ENCODE measurements at regions of chr19 and their contacts with region 1.

Region 1: GRCh38 chr19:5803752-5804515 is 933 bp upstream of the NRTN start:
- DNase-seq: peak; percentile 92
- H3K4me3 Mint-ChIP-seq: peak overlapping the region; percentile 62
- H3K27ac Mint-ChIP-seq: peak overlapping the region; percentile 60
- H3K4me1 Mint-ChIP-seq: peaks cover 28% of the 10 kb centered on the region
- H3K27me3 Mint-ChIP-seq: peaks cover 45% of the 10 kb centered on the region

Region 2: GRCh38 chr19:5690125-5690954 is 113.6 kb before region 1 on chr19 and contains the start of gene RPL36:
- CTCF ChIA-PET with region 1: interaction called, 13 read pairs
- POLR2A ChIA-PET with region 1: no interaction called
- DNase-seq: peak; percentile 98
- H3K4me3 Mint-ChIP-seq: peak within 1 kb of the TSS; percentile 92
- H3K27ac Mint-ChIP-seq: peak within 1 kb of the TSS; percentile 92
- H3K4me1 Mint-ChIP-seq: peaks cover 31% of the 10 kb centered on the region
- H3K27me3 Mint-ChIP-seq: no peaks in the 10 kb centered on the region
- total RNA-seq, gene RPL36: 880 to 925 TPM

Region 3: DNA sequence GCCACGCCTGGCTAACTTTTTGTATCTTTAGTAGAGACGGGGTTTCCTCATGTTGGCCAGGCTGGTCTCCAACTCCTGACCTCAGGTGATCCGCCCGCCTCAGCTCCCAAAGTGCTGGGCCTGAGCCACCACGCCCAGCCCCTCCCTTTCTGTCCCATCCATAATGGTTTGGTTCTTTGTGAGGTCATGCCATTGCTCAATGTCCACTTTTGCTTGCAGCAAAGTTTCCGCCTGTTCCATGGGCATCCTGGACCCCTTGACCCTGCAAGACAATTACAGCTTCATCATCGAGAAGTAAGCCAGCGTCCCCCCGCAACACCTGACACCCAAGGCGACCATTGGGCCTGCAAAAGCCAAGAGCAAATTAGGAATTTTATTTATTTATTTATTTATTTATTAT is 36.0 kb before region 1 on chr19:
- CTCF ChIA-PET with region 1: no interaction called
- POLR2A ChIA-PET with region 1: no interaction called
- DNase-seq: no peak
- H3K4me3 Mint-ChIP-seq: no peak overlapping the region
- H3K27ac Mint-ChIP-seq: no peak overlapping the region
- H3K4me1 Mint-ChIP-seq: no peaks in the 10 kb centered on the region
- H3K27me3 Mint-ChIP-seq: no peaks in the 10 kb centered on the region

Region 4: GRCh38 chr19:5814123-5814851 is 10.4 kb after region 1 on chr19:
- CTCF ChIA-PET with region 1: interaction called, 12 read pairs
- POLR2A ChIA-PET with region 1: no interaction called
- DNase-seq: no peak
- H3K4me3 Mint-ChIP-seq: no peak overlapping the region
- H3K27ac Mint-ChIP-seq: no peak overlapping the region
- H3K4me1 Mint-ChIP-seq: no peaks in the 10 kb centered on the region
- H3K27me3 Mint-ChIP-seq: no peaks in the 10 kb centered on the region

Region 5: DNA sequence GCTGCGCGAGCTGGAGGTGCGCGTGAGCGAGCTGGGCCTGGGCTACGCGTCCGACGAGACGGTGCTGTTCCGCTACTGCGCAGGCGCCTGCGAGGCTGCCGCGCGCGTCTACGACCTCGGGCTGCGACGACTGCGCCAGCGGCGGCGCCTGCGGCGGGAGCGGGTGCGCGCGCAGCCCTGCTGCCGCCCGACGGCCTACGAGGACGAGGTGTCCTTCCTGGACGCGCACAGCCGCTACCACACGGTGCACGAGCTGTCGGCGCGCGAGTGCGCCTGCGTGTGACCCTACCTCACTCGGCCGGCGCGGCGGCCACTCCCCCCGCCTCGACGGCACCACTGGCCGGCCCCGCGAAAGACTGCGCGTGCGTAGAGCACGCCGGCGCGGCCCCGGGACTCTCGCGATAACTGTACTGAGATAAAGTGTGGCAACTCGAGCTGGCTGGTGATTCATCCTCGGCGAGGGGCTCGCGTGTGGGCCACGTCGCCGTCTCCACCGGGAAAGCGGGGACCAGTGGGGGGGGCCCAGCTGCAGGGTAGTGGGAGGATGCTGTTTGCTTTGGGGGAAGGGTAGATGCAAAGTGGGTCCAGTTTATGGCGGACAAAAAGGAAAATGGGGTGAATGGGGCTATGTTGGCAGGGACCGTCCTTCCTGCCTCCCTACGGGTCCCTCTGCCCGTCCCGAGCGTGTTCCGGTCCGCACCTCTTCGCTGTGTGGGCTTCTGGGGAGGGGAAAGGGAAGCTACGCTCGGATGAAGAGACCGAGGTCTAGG is 24.1 kb after region 1 on chr19:
- CTCF ChIA-PET with region 1: interaction called, 60 read pairs
- POLR2A ChIA-PET with region 1: interaction called, 6 read pairs
- DNase-seq: peak; percentile 93
- H3K4me3 Mint-ChIP-seq: peak overlapping the region; percentile 99
- H3K27ac Mint-ChIP-seq: peak overlapping the region; percentile 100
- H3K4me1 Mint-ChIP-seq: peaks cover 12% of the 10 kb centered on the region
- H3K27me3 Mint-ChIP-seq: no peaks in the 10 kb centered on the region

Region 6: DNA sequence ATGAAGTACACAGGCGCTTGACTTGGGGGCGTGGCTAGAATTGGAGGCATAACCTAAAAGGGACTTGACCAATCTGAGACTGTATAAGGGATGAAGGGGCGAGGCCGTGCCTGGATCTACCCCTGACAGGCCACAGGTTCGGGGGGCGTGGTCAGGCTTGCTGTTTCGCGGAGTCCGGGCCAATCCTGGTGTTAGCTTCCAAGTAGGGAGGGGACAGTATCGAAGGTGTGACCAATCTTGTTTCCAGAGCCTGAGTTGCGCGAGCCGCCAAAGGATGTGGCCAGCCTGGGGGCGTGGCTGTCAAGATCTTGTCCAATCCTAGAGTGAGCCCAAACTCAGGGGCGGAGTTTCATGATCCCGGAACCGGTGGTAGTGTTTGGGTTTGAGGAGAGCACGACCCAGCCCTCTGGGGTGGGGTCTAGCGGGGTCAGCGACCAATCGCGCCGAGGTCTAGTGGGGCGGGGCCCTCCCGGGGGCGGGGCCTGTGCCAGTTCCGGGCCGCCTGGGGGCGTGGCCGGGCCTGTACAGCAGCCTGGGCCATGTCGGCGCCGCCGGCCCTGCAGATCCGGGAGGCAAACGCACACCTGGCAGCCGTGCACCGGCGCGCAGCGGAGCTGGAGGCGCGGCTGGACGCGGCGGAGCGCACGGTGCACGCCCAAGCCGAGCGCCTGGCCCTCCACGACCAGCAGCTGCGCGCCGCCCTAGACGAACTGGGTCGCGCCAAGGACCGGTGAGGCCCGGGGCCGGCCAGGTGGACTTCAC is 100.6 kb after region 1 on chr19 and contains the start of gene VMAC:
- CTCF ChIA-PET with region 1: interaction called, 39 read pairs
- POLR2A ChIA-PET with region 1: no interaction called
- DNase-seq: peak; percentile 100
- H3K4me3 Mint-ChIP-seq: peak within 1 kb of the TSS; percentile 86
- H3K27ac Mint-ChIP-seq: peak within 1 kb of the TSS; percentile 100
- H3K4me1 Mint-ChIP-seq: peaks cover 32% of the 10 kb centered on the region
- H3K27me3 Mint-ChIP-seq: no peaks in the 10 kb centered on the region
- total RNA-seq, gene VMAC: 11.8 TPM

Region 7: DNA sequence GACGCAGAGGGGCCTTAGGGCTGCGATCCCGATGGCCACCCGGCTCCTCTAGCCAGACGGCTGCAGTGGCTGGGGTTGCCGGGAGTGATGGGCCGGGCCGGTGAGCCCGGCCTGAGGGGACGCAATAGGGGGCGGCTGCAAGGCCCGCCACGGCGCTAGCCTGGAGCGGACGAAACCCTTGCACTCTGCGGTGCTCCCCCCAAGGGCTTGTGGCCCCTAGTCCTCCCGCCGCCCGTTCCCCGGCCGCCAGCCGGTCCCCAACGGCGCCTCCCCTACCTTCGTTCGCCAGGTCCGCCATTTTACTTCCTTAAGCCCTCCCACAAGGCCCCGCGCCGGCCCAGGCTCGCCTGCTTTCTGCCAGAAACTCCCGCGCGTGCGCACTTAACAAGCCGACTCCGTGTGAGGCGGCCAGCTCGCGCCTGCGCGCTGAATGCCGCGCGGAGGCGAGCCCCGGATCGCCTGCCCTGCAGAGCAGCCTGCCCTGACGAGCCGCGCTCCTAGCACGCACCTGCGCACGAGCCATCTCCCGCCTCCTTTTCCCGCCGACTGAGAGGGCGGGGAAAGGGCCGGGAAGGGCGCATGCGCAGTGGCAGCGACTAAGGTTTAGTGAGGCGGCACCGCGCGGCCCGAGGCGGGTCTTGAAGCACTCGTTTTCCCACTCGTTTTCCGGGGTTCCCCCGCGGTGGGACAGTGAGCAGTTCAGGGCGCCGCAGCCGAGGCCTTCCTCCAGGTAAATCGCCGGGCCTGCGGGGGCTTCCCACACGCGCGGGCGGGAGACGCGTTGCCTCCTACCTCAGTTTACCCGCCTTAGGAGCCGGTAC is 174.1 kb after region 1 on chr19 and contains the start of gene RANBP3:
- CTCF ChIA-PET with region 1: interaction called, 12 read pairs
- POLR2A ChIA-PET with region 1: no interaction called
- DNase-seq: peak; percentile 98
- H3K4me3 Mint-ChIP-seq: peak within 1 kb of the TSS; percentile 94
- H3K27ac Mint-ChIP-seq: peak within 1 kb of the TSS; percentile 93
- H3K4me1 Mint-ChIP-seq: peaks cover 59% of the 10 kb centered on the region
- H3K27me3 Mint-ChIP-seq: no peaks in the 10 kb centered on the region
- total RNA-seq, gene RANBP3: 97.4 to 98.0 TPM

Region 8: DNA sequence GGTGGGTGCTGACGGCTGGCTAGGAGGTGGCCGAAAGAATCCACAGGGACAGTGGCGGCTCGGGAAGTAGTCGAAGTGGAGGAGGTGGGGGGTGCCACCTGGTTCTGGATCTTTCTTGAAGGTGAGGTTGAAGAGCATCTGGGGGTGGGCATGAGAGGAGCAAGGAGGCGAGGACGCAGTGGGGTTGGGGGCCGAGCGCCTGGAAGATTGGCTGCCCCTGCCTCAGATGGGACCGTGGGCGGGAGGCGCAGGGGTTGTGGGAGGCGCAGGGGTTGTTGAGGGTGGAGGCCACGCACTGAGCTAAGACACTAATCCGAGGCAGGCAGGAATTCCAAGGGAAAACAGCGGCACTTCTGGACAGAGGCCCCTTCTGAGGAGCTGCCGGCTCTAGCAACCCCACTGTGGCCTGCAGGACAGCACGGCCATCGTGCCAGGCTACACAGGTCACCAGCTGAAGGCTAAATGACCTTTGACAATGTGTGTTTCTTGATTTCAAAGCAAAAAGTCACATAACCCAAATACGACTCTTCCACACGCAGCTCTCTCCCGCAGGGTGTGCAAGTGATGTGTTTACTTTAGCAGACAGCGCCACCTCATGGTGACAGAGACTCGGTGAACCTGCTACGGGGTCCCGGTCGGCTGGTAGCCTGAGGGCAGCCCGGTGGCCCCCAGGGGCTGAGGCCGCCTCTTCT is 218.1 kb after region 1 on chr19:
- CTCF ChIA-PET with region 1: interaction called, 30 read pairs
- POLR2A ChIA-PET with region 1: interaction called, 3 read pairs
- DNase-seq: peak; percentile 87
- H3K4me3 Mint-ChIP-seq: no peak overlapping the region
- H3K27ac Mint-ChIP-seq: no peak overlapping the region
- H3K4me1 Mint-ChIP-seq: no peaks in the 10 kb centered on the region
- H3K27me3 Mint-ChIP-seq: no peaks in the 10 kb centered on the region

Measured in activated CD4-positive, alpha-beta T cell treated with anti-CD3 and anti-CD28 coated beads, Interleukin-2, amount 10 ng/mL, durations not matched to agents 7 days and 5 days (primary cell).